Naive thymus-derived CD4-positive, alpha-beta T cell (primary cell): ENCODE measurements at regions of chr10 and their contacts with region 1.

Region 1: GRCh38 chr10:60434418-60435046 is 44.9 kb upstream of the ANK3 start:
- DNase-seq: peak in 2 of 9 donors; percentile 6 to 9
- ATAC-seq: no peak
- H3K4me3 ChIP-seq: no peak overlapping the region
- H3K4me3 Mint-ChIP-seq: no peak overlapping the region
- H3K27ac ChIP-seq: no peak overlapping the region
- H3K27ac Mint-ChIP-seq: no peak overlapping the region
- H3K4me1 ChIP-seq: no peaks in the 10 kb centered on the region
- H3K4me1 Mint-ChIP-seq: peaks cover 0 to 16% (median 10%) of the 10 kb centered on the region in 7 donors
- H3K27me3 ChIP-seq: no peaks in the 10 kb centered on the region
- H3K27me3 Mint-ChIP-seq: no peaks in the 10 kb centered on the region

Region 2: GRCh38 chr10:59865101-59865500 is 569.4 kb before region 1 on chr10:
- CTCF ChIA-PET with region 1: no interaction called
- POLR2A ChIA-PET with region 1: no interaction called
- intact Hi-C with region 1: loop called in 1 of 2 experiments (anchors 5 kb)
- DNase-seq: peak in 5 of 9 donors; percentile 9 to 27 (median 16)
- ATAC-seq: peak; percentile 59
- H3K4me3 ChIP-seq: no peak overlapping the region
- H3K4me3 Mint-ChIP-seq: peak overlapping the region in 9 of 10 donors; percentile 1 to 60 (median 41)
- H3K27ac ChIP-seq: no peak overlapping the region
- H3K27ac Mint-ChIP-seq: peak overlapping the region in 8 of 9 donors; percentile 0 to 77 (median 58)
- H3K4me1 ChIP-seq: peaks cover 4 to 14% of the 10 kb centered on the region in 2 donors
- H3K4me1 Mint-ChIP-seq: peaks cover 41 to 80% (median 64%) of the 10 kb centered on the region in 7 donors
- H3K27me3 ChIP-seq: no peaks in the 10 kb centered on the region
- H3K27me3 Mint-ChIP-seq: no peaks in the 10 kb centered on the region

Region 3: DNA sequence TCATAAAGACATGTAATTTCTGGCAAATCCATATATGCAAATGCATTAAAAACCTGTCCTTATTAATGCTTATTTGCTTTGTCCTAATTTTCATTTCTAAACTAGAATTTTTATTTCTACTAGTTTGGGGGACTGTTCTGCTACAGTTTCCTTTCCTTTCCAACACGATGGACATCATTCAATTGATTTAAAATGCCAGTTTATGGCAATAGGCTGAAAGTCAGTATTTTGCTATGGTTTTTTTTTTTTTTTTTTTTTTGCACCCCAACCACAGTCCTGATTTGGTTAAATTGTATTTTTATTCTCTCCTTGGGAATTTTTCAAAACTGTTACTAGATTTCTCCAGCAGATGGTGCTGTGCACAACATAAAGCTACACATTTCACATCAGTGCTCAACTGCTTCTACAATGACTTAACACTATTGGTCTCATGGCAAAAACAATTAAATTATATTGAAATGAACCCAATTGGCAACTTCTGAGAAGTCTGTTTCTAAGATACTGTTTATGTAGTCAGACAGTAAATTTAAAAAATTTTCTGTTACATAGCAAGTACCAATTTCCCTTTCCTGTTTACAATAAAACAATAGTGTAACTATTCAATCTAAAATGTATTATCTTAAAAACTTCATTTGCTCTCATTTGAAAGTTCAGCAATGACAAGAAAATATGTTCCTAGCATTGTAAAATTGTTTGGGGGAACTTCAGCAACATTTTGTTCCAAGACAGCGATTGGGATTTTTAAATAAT is 334.4 kb before region 1 on chr10:
- CTCF ChIA-PET with region 1: no interaction called
- POLR2A ChIA-PET with region 1: no interaction called
- intact Hi-C with region 1: loop called (anchors 1 to 2 kb)
- DNase-seq: peak in 6 of 9 donors; percentile 14 to 43 (median 31)
- ATAC-seq: peak; percentile 69
- H3K4me3 ChIP-seq: no peak overlapping the region
- H3K4me3 Mint-ChIP-seq: no peak overlapping the region
- H3K27ac ChIP-seq: no peak overlapping the region
- H3K27ac Mint-ChIP-seq: no peak overlapping the region
- H3K4me1 ChIP-seq: no peaks in the 10 kb centered on the region
- H3K4me1 Mint-ChIP-seq: no peaks in the 10 kb centered on the region
- H3K27me3 ChIP-seq: no peaks in the 10 kb centered on the region
- H3K27me3 Mint-ChIP-seq: no peaks in the 10 kb centered on the region

Region 4: GRCh38 chr10:60114765-60115586 is 319.6 kb before region 1 on chr10:
- CTCF ChIA-PET with region 1: no interaction called
- POLR2A ChIA-PET with region 1: no interaction called
- intact Hi-C with region 1: loop called in 1 of 2 experiments (anchors 1 kb)
- DNase-seq: peak in 6 of 9 donors; percentile 1 to 58 (median 44)
- ATAC-seq: peak; percentile 54
- H3K4me3 ChIP-seq: no peak overlapping the region
- H3K4me3 Mint-ChIP-seq: no peak overlapping the region
- H3K27ac ChIP-seq: no peak overlapping the region
- H3K27ac Mint-ChIP-seq: no peak overlapping the region
- H3K4me1 ChIP-seq: no peaks in the 10 kb centered on the region
- H3K4me1 Mint-ChIP-seq: no peaks in the 10 kb centered on the region
- H3K27me3 ChIP-seq: no peaks in the 10 kb centered on the region
- H3K27me3 Mint-ChIP-seq: no peaks in the 10 kb centered on the region

Region 5: DNA sequence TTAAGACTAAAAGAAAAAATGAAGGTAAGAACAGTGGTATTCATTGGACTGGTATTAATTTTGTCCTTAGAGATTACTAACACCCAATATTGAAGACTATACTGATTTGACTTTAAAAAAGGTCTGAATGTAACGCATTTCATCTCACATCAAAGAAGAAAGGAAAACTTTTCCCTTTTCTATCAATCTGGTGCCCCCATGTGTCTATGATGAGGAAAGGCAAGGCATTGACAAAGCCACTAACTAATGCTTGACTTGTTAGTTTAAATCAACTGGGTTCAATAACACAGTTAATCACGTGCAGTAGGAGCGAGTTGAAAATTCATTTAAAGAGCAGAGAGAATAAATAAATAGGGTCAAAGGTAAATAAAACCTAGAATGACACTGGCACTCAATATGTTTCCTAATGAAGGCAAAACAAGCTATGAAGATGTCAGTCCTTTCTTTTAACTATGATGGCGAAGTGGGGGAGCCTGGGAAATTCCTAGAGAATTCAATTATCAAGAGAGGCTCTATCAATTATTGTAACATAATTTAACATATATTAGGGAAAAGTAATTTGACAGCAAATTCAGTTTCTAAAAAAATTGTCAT is 225.8 kb before region 1 on chr10:
- CTCF ChIA-PET with region 1: no interaction called
- POLR2A ChIA-PET with region 1: no interaction called
- intact Hi-C with region 1: loop called (anchors 1 kb)
- DNase-seq: no peak
- ATAC-seq: no peak
- H3K4me3 ChIP-seq: no peak overlapping the region
- H3K4me3 Mint-ChIP-seq: no peak overlapping the region
- H3K27ac ChIP-seq: no peak overlapping the region
- H3K27ac Mint-ChIP-seq: peak overlapping the region in 1 of 9 donors; percentile 72
- H3K4me1 ChIP-seq: peaks cover 0 to 11% of the 10 kb centered on the region in 2 donors
- H3K4me1 Mint-ChIP-seq: peaks cover 12 to 37% (median 28%) of the 10 kb centered on the region in 7 donors
- H3K27me3 ChIP-seq: no peaks in the 10 kb centered on the region
- H3K27me3 Mint-ChIP-seq: no peaks in the 10 kb centered on the region

Region 6: GRCh38 chr10:60237977-60238758 is 196.4 kb before region 1 on chr10:
- CTCF ChIA-PET with region 1: no interaction called
- POLR2A ChIA-PET with region 1: no interaction called
- intact Hi-C with region 1: loop called in 1 of 2 experiments (anchors 10 kb)
- DNase-seq: peak in 1 of 9 donors; percentile 3
- ATAC-seq: peak; percentile 44
- H3K4me3 ChIP-seq: peak overlapping the region; percentile 32
- H3K4me3 Mint-ChIP-seq: peak overlapping the region in 6 of 10 donors; percentile 17 to 81 (median 53)
- H3K27ac ChIP-seq: no peak overlapping the region
- H3K27ac Mint-ChIP-seq: peak overlapping the region in 5 of 9 donors; percentile 19 to 67 (median 25)
- H3K4me1 ChIP-seq: peaks cover 3 to 8% of the 10 kb centered on the region in 2 donors
- H3K4me1 Mint-ChIP-seq: peaks cover 29 to 44% (median 32%) of the 10 kb centered on the region in 7 donors
- H3K27me3 ChIP-seq: no peaks in the 10 kb centered on the region
- H3K27me3 Mint-ChIP-seq: no peaks in the 10 kb centered on the region